B cell (primary cell): ENCODE measurements at regions of chr17 and their contacts with region 1.

Region 1: DNA sequence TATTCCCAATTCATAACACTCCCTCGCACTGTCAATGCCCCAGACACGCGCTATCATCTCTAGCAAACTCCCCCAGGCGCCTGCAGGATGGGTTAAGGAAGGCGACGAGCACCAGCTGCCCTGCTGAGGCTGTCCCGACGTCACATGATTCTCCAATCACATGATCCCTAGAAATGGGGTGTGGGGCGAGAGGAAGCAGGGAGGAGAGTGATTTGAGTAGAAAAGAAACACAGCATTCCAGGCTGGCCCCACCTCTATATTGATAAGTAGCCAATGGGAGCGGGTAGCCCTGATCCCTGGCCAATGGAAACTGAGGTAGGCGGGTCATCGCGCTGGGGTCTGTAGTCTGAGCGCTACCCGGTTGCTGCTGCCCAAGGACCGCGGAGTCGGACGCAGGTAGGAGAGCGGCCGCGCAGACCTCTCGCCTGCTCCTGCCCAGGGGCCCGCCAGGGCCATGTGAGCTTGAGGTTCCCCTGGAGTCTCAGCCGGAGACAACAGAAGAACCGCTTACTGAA is at the start of gene GRN:
- DNase-seq: peak; percentile 91
- ATAC-seq: peak; percentile 76
- H3K4me3 ChIP-seq: peak within 1 kb of the TSS; percentile 61 to 94 (median 91)
- H3K4me3 Mint-ChIP-seq: peak within 1 kb of the TSS; percentile 96
- H3K27ac ChIP-seq: peak within 1 kb of the TSS; percentile 85 to 89
- H3K27ac Mint-ChIP-seq: peak within 1 kb of the TSS; percentile 90
- H3K4me1 ChIP-seq: peaks cover 37 to 52% of the 10 kb centered on the region in 2 donors
- H3K4me1 Mint-ChIP-seq: peaks cover 45% of the 10 kb centered on the region
- H3K27me3 ChIP-seq: no peaks in the 10 kb centered on the region
- H3K27me3 Mint-ChIP-seq: no peaks in the 10 kb centered on the region
- CTCF ChIP-seq: no peak
- total RNA-seq, gene GRN: 185 and 187 TPM in 2 replicates

Region 2: DNA sequence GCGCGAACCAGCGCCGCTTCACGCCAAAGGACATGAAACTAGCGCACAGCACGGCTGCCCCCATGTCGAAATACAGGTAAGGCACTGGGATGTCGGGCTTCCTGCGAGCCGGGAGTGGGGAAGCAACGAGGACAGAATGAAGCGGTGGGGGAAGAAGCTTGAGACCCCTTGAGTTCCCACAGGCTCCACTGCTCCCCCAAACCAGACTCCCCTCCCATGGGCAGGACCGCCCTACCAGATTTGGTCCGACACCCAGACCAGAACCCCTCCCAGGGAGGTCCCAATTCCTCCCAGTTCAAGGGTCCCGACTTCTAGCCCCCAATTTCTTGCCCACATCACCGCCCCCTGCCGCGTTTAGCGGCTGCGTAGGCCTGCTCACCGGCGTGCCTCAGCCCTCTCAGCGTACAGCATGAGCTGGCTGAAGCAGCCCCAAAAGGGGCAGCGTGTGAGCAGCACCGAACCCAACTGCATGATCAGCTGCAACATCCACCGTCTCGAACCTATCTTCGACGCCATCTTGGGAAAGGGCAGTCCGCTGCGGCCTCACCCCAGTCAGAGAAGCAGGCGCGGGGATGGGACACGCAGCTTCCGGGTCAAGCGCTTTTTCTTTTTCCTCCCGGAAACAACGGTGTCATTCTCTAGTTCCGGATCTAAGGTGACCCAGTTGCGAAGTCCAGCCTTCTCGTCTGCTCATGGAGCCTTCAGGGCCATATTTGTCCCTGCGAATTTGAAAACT is 330.4 kb before region 1 on chr17 and contains the start of gene TMEM101:
- CTCF ChIA-PET with region 1: no interaction called
- POLR2A ChIA-PET with region 1: no interaction called
- intact Hi-C with region 1: loop called (anchors 2 kb)
- DNase-seq: peak; percentile 91
- ATAC-seq: peak; percentile 96
- H3K4me3 ChIP-seq: peak within 1 kb of the TSS; percentile 71 to 98 (median 96)
- H3K4me3 Mint-ChIP-seq: peak within 1 kb of the TSS; percentile 100
- H3K27ac ChIP-seq: peak within 1 kb of the TSS; percentile 35 to 45
- H3K27ac Mint-ChIP-seq: peak within 1 kb of the TSS; percentile 94
- H3K4me1 ChIP-seq: peaks cover 9 to 15% of the 10 kb centered on the region in 2 donors
- H3K4me1 Mint-ChIP-seq: peaks cover 14% of the 10 kb centered on the region
- H3K27me3 ChIP-seq: no peaks in the 10 kb centered on the region
- H3K27me3 Mint-ChIP-seq: no peaks in the 10 kb centered on the region
- CTCF ChIP-seq: no peak
- total RNA-seq, gene TMEM101: 25.2 and 25.3 TPM in 2 replicates

Region 3: GRCh38 chr17:44141717-44142285 is 203.2 kb before region 1 on chr17 and contains the start of gene HROB:
- CTCF ChIA-PET with region 1: no interaction called
- POLR2A ChIA-PET with region 1: no interaction called
- intact Hi-C with region 1: loop called (anchors 2 kb)
- DNase-seq: peak; percentile 97
- ATAC-seq: peak; percentile 99
- H3K4me3 ChIP-seq: peak within 1 kb of the TSS; percentile 41 to 85 (median 76)
- H3K4me3 Mint-ChIP-seq: peak within 1 kb of the TSS; percentile 87
- H3K27ac ChIP-seq: peak within 1 kb of the TSS; percentile 57 to 84
- H3K27ac Mint-ChIP-seq: peak within 1 kb of the TSS; percentile 61
- H3K4me1 ChIP-seq: peaks cover 9 to 11% of the 10 kb centered on the region in 2 donors
- H3K4me1 Mint-ChIP-seq: peaks cover 8% of the 10 kb centered on the region
- H3K27me3 ChIP-seq: peaks cover 0 to 20% (median 3%) of the 10 kb centered on the region in 4 experiments
- H3K27me3 Mint-ChIP-seq: peaks cover 14% of the 10 kb centered on the region
- CTCF ChIP-seq: peak; percentile 84
- total RNA-seq, gene HROB: 2.7 and 3.2 TPM in 2 replicates

Region 4: DNA sequence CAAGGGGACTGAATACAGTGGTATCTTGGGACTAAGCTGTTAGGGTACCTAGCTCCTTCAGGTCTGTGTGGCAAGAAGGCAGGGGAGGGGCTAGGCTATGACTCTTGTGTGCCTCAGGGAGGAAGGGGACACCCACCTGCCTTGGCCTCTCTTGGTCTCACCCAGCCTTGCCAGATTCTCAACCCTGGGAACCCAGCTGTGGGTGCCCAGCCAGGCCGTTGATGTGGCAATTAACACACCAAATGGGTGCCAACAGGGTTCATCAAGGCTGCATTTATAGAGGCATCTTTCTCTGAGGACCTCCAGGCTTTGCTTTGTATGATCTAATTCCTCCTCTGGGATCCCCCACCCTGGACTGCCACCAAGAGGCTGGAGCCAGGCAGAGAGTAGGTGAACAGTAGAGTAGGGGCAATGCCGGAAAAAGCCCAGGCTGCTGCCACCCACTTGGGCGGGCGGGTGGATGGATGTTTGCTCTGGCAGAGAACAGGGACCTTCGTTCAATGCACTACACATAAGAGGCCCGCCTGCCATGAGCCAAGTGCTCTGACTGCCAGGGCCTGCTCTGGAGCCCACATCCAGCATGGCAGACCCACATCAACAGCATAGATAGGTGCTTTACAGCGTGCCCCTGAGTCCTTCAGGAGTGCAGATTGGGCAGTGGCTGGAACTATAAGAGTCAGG is 177.7 kb before region 1 on chr17:
- CTCF ChIA-PET with region 1: no interaction called
- POLR2A ChIA-PET with region 1: no interaction called
- intact Hi-C with region 1: no loop called
- DNase-seq: no peak
- ATAC-seq: no peak
- H3K4me3 ChIP-seq: no peak overlapping the region
- H3K4me3 Mint-ChIP-seq: no peak overlapping the region
- H3K27ac ChIP-seq: no peak overlapping the region
- H3K27ac Mint-ChIP-seq: no peak overlapping the region
- H3K4me1 ChIP-seq: peaks cover 0 to 13% of the 10 kb centered on the region in 2 donors
- H3K4me1 Mint-ChIP-seq: peaks cover 9% of the 10 kb centered on the region
- H3K27me3 ChIP-seq: no peaks in the 10 kb centered on the region
- H3K27me3 Mint-ChIP-seq: no peaks in the 10 kb centered on the region
- CTCF ChIP-seq: no peak

Region 5: DNA sequence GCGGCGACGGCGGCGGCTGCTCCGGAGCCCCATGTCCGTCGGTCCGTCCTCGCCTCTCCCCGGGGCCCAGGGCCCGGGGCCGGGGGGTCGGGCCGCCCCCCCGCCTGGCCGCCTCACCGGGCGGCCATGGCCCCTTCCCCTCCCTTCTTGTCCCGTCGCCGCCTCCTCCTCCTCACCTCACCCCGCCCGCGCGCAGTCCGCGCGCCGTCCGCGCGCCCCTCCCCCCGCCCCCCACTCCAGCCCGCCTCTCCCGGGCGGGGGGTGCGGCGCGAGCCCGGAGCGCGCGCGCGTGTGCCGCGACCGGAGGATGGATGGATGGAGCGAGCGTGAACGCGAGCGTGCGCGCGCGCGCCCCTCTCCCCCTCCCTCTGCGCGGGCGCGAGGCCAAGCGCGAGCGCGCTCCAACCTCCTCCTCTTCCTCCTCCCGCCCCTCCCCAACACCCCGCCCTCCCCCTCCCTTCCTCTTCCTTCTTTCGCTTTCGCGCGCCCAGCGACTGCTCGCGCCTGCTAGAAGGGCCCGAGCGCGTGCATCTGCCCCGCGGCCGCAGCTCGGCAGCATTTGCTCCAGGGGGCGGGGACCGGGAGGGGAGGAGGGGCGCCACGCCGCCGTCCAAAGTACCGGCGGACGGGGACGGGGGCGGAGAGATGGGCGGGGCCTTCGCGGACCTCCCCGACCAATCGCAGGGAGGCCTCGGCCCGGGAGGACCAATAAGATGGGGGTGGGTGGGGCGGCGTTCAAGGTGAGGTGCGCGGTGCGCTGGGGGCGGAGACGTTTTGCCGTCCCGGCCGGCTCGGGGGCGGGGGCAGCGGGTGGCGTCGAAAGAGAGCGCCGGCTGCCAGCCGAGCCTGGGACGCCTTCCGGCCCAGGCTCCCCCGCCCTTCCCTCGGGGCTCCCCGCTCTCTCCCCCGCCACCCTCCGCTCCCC is 145.2 kb before region 1 on chr17 and contains the start of gene ATXN7L3:
- CTCF ChIA-PET with region 1: interaction called, 44 read pairs
- POLR2A ChIA-PET with region 1: interaction called, 5 read pairs
- intact Hi-C with region 1: loop called (anchors 1 kb)
- DNase-seq: peak; percentile 100
- ATAC-seq: peak; percentile 81
- H3K4me3 ChIP-seq: peak within 1 kb of the TSS; percentile 66 to 83 (median 81)
- H3K4me3 Mint-ChIP-seq: peak within 1 kb of the TSS; percentile 88
- H3K27ac ChIP-seq: peak within 1 kb of the TSS; percentile 89 to 90
- H3K27ac Mint-ChIP-seq: peak within 1 kb of the TSS; percentile 95
- H3K4me1 ChIP-seq: peaks cover 30 to 43% of the 10 kb centered on the region in 2 donors
- H3K4me1 Mint-ChIP-seq: peaks cover 46% of the 10 kb centered on the region
- H3K27me3 ChIP-seq: no peaks in the 10 kb centered on the region
- H3K27me3 Mint-ChIP-seq: no peaks in the 10 kb centered on the region
- CTCF ChIP-seq: no peak
- total RNA-seq, gene ATXN7L3: 107 and 119 TPM in 2 replicates

Region 6: GRCh38 chr17:44363613-44364159 is 18.7 kb after region 1 on chr17 and contains the start of gene FAM171A2:
- CTCF ChIA-PET with region 1: interaction called, 52 read pairs
- POLR2A ChIA-PET with region 1: interaction called, 3 read pairs
- intact Hi-C with region 1: loop called (anchors 1 kb)
- DNase-seq: peak; percentile 82
- ATAC-seq: peak; percentile 91
- H3K4me3 ChIP-seq: peak within 1 kb of the TSS in 4 of 5 experiments; percentile 29 to 70 (median 56)
- H3K4me3 Mint-ChIP-seq: peak within 1 kb of the TSS; percentile 88
- H3K27ac ChIP-seq: no peak within 1 kb of the TSS
- H3K27ac Mint-ChIP-seq: no peak within 1 kb of the TSS
- H3K4me1 ChIP-seq: peaks cover 10 to 17% of the 10 kb centered on the region in 2 donors
- H3K4me1 Mint-ChIP-seq: peaks cover 9% of the 10 kb centered on the region
- H3K27me3 ChIP-seq: peaks cover 0 to 35% (median 13%) of the 10 kb centered on the region in 4 experiments
- H3K27me3 Mint-ChIP-seq: peaks cover 39% of the 10 kb centered on the region
- CTCF ChIP-seq: peak; percentile 87
- total RNA-seq, gene FAM171A2: 0.69 and 1.00 TPM in 2 replicates